Lower leg skin (tissue), 4 donors: ENCODE measurements at regions of chr16 and their contacts with region 1.

Region 1: GRCh38 chr16:19067349-19068236 is at the start of gene COQ7:
- DNase-seq: peak; percentile 98 to 99
- H3K4me3 ChIP-seq: peak within 1 kb of the TSS; percentile 41
- CTCF ChIP-seq: no peak
- POLR2A ChIP-seq: no peak
- total RNA-seq, gene COQ7: 11.4 to 18.3 (median 15.4) TPM

Region 2: GRCh38 chr16:18983565-18984424 is 83.8 kb before region 1 on chr16 and contains the start of gene TMC7:
- intact Hi-C with region 1: loop called (anchors 5 kb)
- DNase-seq: peak; percentile 34 to 91
- H3K4me3 ChIP-seq: peak within 1 kb of the TSS; percentile 40
- CTCF ChIP-seq: no peak
- POLR2A ChIP-seq: no peak
- total RNA-seq, gene TMC7: 0.38 to 1.6 (median 0.73) TPM

Region 3: GRCh38 chr16:19001788-19002187 is 65.8 kb before region 1 on chr16:
- intact Hi-C with region 1: loop called (anchors 5 kb)
- DNase-seq: no peak
- H3K4me3 ChIP-seq: no peak overlapping the region
- CTCF ChIP-seq: no peak
- POLR2A ChIP-seq: no peak

Region 4: DNA sequence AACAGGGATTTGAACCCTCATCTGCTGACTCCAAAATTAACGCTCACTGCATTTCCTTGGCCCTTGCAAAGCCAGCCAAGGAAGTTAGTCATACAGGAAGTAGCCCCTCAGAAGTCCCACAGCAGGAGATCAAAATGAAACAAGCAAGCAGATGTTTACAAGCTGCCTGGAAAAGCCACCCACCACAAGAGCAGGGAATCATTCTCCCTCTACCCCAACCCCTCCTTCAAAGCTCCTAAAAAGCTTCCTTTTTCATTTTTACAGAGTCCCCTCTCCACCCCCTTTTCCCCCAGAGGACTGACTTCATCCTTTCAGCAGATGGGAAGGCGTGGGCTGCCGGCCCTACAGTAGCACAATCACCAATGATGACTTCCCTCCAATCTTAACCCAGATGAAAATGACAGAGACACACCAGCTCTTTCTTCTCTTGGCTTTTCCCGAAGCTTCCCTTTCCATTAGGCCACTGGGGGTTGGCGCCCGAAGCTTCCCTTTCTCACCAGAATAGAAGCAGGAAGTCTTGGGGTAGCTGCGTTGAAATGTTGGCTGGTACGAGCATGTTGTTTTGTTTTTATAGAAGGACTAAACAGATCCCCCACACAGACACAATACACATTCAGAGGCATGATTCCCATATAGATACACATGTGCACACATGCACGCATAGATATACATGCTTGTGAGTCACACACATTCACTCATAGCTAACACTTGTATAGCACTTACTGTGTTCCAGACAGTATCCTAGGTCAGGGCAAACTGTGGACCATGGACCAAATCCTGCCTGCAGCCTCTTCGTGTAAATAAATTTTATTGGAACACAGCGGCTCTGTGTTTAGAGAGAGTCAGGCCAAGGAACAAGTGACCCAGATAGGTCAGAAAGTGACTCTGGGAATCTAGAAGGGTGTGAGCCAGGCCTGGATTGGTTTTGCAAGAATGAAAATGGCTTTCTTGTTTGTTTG is 63.5 kb after region 1 on chr16:
- intact Hi-C with region 1: no loop called
- DNase-seq: peak in 1 of 2 donors; percentile 92
- H3K4me3 ChIP-seq: no peak overlapping the region
- CTCF ChIP-seq: no peak
- POLR2A ChIP-seq: no peak